Ascending aorta (tissue), 2 donors: ENCODE measurements at regions of chr2 and their contacts with region 1.

Region 1: GRCh38 chr2:224585205-224586088 is at the start of gene CUL3:
- DNase-seq: peak; percentile 91 to 100
- H3K4me3 ChIP-seq: peak within 1 kb of the TSS; percentile 69 to 90
- H3K27ac ChIP-seq: peak within 1 kb of the TSS; percentile 89 to 95
- H3K4me1 ChIP-seq: peaks cover 0 to 12% of the 10 kb centered on the region in 2 donors
- H3K27me3 ChIP-seq: no peaks in the 10 kb centered on the region
- CTCF ChIP-seq: no peak
- total RNA-seq, gene CUL3: 16.1 TPM

Region 2: DNA sequence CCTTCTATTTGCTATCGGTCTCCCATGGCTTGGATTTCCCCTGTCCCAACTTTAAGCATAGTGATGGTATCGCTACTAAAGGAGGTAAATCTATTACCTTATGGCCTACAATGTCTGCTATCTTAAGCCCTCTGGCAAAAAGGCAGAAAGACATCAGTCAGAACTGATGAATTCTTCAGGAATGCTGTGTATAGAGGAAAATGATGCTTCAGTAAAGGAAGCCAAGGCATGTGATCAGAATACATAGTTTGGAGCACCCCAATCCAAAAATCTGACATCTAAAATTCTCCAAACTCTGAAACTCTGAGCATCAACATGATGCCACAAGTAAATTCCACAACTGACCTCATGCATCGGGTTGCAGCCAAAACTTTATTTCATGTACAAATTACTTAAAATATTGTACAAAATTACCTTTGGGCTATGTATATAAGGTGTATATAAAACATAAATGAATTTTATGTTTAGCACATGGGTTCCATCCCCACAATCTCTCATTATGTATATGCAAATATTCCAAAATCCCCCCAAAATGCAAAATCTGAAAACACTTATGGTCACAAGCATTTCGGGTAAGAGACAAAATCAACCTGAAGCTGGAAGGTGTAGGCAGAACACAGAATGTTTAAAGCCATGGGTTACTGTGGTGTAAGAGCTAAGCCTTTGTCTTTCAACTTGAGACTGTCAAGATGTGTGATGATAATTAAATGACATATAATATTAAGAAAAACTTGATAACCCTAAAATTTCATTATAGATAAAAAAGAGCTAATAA is 66.5 kb before region 1 on chr2:
- intact Hi-C with region 1: loop called (anchors 10 kb)
- DNase-seq: no peak
- H3K4me3 ChIP-seq: no peak overlapping the region
- H3K27ac ChIP-seq: peak overlapping the region in 1 of 2 donors; percentile 0
- H3K4me1 ChIP-seq: peaks cover 0 to 23% of the 10 kb centered on the region in 2 donors
- H3K27me3 ChIP-seq: no peaks in the 10 kb centered on the region
- CTCF ChIP-seq: no peak

Region 3: GRCh38 chr2:224973112-224974016 is 387.9 kb after region 1 on chr2:
- intact Hi-C with region 1: loop called (anchors 10 kb)
- DNase-seq: peak; percentile 15 to 71
- H3K4me3 ChIP-seq: peak overlapping the region; percentile 28 to 48
- H3K27ac ChIP-seq: peak overlapping the region; percentile 79 to 87
- H3K4me1 ChIP-seq: peaks cover 5 to 16% of the 10 kb centered on the region in 2 donors
- H3K27me3 ChIP-seq: no peaks in the 10 kb centered on the region
- CTCF ChIP-seq: no peak